ENCODE measurements at regions of chr17 and their contacts with region 1.

Region 1: DNA sequence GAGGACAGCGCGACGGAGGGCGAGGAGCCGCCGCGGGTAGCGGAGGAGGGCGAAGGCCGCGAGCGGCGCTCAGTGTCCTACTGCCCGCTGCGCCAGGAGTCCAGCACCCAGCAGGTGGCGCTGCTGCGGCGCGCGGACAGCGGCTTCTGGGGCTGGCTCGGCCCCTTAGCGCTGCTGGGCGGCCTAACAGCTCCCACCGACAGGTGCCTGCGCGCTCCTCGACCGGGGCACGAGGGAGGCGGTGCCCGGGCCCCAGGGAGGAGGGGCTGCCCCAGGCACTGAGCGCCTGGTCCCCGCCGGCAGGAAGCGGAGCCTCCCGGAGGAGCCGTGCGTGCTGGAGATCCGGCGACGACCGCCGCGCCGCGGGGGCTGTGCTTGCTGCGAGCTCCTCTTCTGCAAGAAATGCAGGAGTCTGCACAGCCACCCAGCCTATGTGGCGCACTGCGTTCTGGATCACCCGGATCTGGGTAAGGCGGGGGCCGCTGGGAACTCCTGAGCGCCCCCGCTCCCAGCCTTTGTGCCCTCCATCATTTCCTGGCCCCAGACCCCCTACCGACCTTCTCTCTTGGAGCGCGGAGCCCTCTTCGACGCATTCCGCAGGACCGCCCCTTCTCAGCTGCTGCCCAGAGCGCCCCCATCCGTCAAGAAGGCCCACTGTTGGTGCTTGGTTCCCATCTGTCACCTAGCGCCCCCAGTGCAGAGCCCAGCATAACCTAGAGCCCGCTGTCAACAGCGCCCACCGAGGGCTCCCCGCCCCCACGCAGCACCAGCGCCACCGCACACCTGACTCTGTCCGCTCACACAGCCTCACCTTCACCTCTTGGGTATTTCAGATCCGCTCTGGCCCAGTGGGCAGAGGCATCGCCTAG is 3.7 kb downstream of the C17orf50 start:
- DNase-seq: peak; percentile 89
- H3K4me3 Mint-ChIP-seq: peak overlapping the region; percentile 91
- H3K27ac Mint-ChIP-seq: peak overlapping the region; percentile 74
- H3K4me1 Mint-ChIP-seq: peaks cover 12% of the 10 kb centered on the region
- H3K27me3 Mint-ChIP-seq: peaks cover 51% of the 10 kb centered on the region

Region 2: DNA sequence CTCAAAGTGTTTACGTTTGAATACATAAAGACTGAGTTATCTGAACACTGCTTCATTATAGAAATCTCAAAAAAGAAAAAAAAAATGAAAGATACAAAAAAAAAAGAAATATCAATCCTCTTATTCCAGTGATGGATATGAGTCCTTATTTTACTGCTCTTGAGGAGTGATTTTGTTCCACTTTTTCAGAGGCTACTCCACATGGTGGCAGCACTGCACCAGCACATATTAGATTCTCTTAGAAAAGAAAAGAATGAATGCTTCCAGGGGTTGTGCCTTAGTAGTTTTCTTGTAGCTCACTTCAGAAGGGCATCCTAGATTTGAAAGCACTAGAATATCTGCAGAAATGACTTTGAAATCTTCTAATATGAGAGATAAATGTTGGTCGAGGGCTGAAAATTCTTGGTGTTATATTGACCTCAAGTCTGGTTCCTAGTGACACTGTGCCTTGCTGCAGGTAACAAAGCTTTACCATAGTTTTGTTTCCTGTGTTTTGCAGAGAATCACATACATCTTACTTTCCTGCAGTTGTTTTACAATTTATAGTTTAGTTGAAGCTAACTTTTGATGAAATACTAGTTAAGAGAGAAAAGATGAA is 151.3 kb before region 1 on chr17:
- CTCF ChIA-PET with region 1: interaction called, 11 read pairs
- DNase-seq: peak; percentile 68
- H3K4me3 Mint-ChIP-seq: no peak overlapping the region
- H3K27ac Mint-ChIP-seq: no peak overlapping the region
- H3K4me1 Mint-ChIP-seq: no peaks in the 10 kb centered on the region
- H3K27me3 Mint-ChIP-seq: no peaks in the 10 kb centered on the region

Region 3: GRCh38 chr17:35630530-35631148 is 133.7 kb before region 1 on chr17:
- CTCF ChIA-PET with region 1: no interaction called
- DNase-seq: no peak
- H3K4me3 Mint-ChIP-seq: no peak overlapping the region
- H3K27ac Mint-ChIP-seq: no peak overlapping the region
- H3K4me1 Mint-ChIP-seq: no peaks in the 10 kb centered on the region
- H3K27me3 Mint-ChIP-seq: no peaks in the 10 kb centered on the region

Region 4: DNA sequence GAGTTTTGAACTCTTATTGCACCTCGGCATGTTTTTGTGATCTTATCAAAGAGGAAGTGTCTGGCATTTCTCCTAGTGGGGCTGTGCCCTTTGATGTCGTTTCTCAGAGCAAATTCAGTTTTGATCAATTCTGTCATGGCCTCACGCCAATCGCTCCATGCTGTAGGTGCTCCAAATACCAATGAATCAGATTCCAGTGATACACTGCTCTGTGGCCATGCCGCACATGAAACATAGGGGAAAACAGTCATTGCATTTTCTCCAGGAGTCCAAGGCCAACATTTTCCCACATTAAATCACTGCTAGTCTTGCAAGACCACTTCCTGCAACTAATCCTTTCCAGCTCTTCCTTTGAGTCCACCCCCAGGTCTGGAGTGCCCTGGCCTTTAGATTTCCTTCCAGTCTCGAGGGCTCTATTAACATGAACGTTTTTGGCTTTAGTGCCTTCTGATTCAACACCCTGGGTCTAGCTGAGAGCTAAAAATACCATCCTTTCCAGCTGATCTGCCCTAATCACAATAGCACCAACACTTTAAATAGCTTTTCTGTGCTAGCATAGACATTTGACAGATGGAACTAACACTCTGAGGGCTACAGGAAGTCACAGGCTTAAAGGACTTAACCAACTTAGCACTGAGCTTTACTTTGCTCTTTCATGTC is 51.2 kb before region 1 on chr17:
- CTCF ChIA-PET with region 1: no interaction called
- DNase-seq: no peak
- H3K4me3 Mint-ChIP-seq: no peak overlapping the region
- H3K27ac Mint-ChIP-seq: no peak overlapping the region
- H3K4me1 Mint-ChIP-seq: peaks cover 16% of the 10 kb centered on the region
- H3K27me3 Mint-ChIP-seq: no peaks in the 10 kb centered on the region

Region 5: DNA sequence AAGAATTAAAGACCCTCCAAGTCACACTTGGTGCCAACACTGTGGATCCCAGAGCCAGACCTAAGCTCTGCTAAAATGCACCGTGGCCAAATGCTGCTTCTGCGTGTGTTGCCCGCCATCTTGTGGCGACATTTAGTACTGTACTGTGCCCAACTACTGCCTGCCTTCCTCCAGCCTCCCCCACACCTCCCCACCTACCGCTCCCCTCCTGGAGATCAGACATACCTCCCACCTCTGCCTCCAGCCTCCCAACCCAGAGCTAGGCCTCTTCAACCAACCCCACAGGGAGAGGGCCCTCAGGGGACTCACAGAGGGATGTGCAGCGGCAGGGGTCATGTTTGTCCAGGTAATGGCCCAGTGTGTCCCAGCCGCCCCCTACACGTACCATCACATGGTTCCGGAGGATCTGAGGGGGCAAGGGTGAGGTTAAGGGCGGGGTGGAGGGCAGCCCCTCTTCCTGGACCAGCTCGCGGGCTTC is 16.8 kb before region 1 on chr17:
- CTCF ChIA-PET with region 1: interaction called, 13 read pairs
- DNase-seq: peak; percentile 86
- H3K4me3 Mint-ChIP-seq: no peak overlapping the region
- H3K27ac Mint-ChIP-seq: no peak overlapping the region
- H3K4me1 Mint-ChIP-seq: peaks cover 13% of the 10 kb centered on the region
- H3K27me3 Mint-ChIP-seq: peaks cover 83% of the 10 kb centered on the region

Region 6: GRCh38 chr17:35793257-35793656 is 28.9 kb after region 1 on chr17:
- CTCF ChIA-PET with region 1: interaction called, 18 read pairs
- DNase-seq: no peak
- H3K4me3 Mint-ChIP-seq: no peak overlapping the region
- H3K27ac Mint-ChIP-seq: no peak overlapping the region
- H3K4me1 Mint-ChIP-seq: peaks cover 25% of the 10 kb centered on the region
- H3K27me3 Mint-ChIP-seq: peaks cover 67% of the 10 kb centered on the region

Region 7: GRCh38 chr17:35816723-35817122 is 52.4 kb after region 1 on chr17:
- CTCF ChIA-PET with region 1: interaction called, 219 read pairs
- DNase-seq: no peak
- H3K4me3 Mint-ChIP-seq: no peak overlapping the region
- H3K27ac Mint-ChIP-seq: no peak overlapping the region
- H3K4me1 Mint-ChIP-seq: peaks cover 45% of the 10 kb centered on the region
- H3K27me3 Mint-ChIP-seq: no peaks in the 10 kb centered on the region